ENCODE measurements at regions of chr6 and their contacts with region 1.

Region 1: DNA sequence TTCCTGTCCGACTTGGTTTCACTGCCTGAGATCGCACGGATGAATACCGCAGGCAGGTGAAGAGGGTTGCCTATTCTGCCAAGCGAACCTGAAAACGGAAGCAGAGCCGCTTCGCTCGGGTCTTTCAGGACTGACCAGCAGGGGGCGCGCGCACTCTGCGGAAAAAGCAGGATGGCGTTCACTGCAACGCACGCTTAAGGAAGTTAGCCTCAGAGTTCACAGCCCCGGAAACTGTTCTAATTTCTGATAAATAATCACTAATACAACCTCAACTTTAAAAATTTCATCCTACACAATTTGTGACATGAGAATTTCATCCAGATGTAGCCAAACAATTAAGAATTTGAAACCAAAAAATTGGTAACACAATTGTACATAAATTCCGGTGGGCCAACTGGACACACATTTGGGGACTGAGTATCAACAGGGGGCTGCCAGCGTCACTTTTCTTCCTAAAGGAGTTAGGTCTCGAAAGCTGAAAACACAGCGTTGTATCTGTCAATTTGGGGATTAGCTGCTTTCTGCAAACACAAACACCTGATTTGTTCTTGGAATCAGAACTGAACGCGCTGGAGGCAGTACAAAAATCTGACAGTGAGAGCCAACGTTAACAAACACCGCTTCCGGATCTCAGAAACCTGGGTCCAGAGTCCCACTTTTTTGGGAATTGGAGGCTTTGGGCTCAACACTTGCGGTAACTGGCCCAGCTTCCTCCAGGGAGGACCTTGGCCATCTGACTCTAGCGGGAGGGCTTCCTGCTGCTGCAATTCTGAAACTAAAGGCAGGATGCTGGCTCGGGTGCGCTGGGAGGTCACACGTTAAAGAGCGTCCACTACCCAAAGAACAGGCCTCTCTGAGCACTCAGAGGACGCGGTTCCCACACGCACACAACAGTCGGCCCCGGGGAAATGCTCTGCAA is 8.8 kb downstream of the PXDC1 start:
- DNase-seq: peak; percentile 68 to 93 (median 81)
- H3K4me3 ChIP-seq: peak overlapping the region in 1 of 4 donors; percentile 31
- H3K27ac ChIP-seq: peak overlapping the region in 4 of 5 donors; percentile 34 to 88 (median 56)
- H3K4me1 ChIP-seq: peaks cover 0 to 24% of the 10 kb centered on the region in 2 donors
- H3K27me3 ChIP-seq: no peaks in the 10 kb centered on the region
- CTCF ChIP-seq: peak; percentile 93 to 98 (median 96)
- POLR2A ChIP-seq: no peak

Region 2: GRCh38 chr6:3427687-3428085 is 315.0 kb before region 1 on chr6:
- intact Hi-C with region 1: no loop called
- DNase-seq: peak; percentile 77 to 91 (median 83)
- H3K4me3 ChIP-seq: no peak overlapping the region
- H3K27ac ChIP-seq: no peak overlapping the region
- H3K4me1 ChIP-seq: peaks cover 0 to 5% of the 10 kb centered on the region in 2 donors
- H3K27me3 ChIP-seq: no peaks in the 10 kb centered on the region
- CTCF ChIP-seq: no peak
- POLR2A ChIP-seq: no peak

Region 3: GRCh38 chr6:3887150-3887700 is 144.5 kb after region 1 on chr6:
- intact Hi-C with region 1: loop called in 1 of 2 experiments (anchors 5 kb)
- DNase-seq: peak in 3 of 7 donors; percentile 24 to 55 (median 37)
- H3K4me3 ChIP-seq: no peak overlapping the region
- H3K27ac ChIP-seq: no peak overlapping the region
- H3K4me1 ChIP-seq: no peaks in the 10 kb centered on the region
- H3K27me3 ChIP-seq: no peaks in the 10 kb centered on the region
- CTCF ChIP-seq: peak; percentile 20 to 65 (median 52)
- POLR2A ChIP-seq: no peak

Region 4: GRCh38 chr6:3929281-3929798 is 186.7 kb after region 1 on chr6:
- intact Hi-C with region 1: loop called in 1 of 2 experiments (anchors 5 kb)
- DNase-seq: peak in 5 of 7 donors; percentile 26 to 69 (median 32)
- H3K4me3 ChIP-seq: no peak overlapping the region
- H3K27ac ChIP-seq: peak overlapping the region in 1 of 5 donors; percentile 49
- H3K4me1 ChIP-seq: no peaks in the 10 kb centered on the region
- H3K27me3 ChIP-seq: no peaks in the 10 kb centered on the region
- CTCF ChIP-seq: no peak
- POLR2A ChIP-seq: no peak

Region 5: DNA sequence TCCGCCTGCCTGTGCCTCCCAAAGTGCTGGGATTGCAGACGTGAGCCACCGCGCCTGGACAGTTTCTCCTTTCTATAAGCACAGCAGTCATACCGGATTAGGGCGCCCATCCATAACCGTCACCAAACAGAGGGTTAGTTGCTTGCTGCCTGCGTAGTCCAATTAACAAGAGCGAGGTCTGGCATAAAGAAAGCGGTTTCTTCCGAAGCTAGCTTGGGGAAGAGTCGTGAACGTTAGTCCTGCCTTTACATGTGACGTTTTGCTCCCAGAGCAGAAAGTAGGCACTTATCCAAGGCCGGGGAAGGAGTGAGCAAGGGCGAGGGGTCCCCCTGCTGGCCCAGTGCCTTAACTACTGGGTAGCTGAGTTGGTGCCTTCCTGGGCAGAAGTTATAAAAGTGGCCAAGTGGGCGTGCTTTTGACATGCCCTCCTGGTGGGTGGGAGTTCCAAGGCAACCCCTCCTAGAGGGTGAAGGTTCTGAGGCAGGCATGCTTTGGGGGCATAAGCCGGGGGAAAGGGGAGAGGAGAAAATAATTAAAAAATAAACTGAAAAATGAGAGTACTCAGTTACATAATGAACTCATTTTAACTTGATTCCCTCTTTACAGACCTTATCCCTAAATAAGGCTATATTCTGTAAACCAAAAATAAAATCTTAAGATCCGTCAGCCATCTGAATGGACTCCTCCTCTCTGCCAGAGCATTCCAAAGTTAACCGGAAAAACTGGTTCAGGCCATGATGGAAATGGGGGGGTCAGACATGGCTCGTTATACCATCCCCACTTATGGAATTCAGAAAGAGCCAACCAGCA is 248.2 kb after region 1 on chr6:
- intact Hi-C with region 1: loop called (anchors 5 kb)
- DNase-seq: peak; percentile 83 to 96 (median 93)
- H3K4me3 ChIP-seq: peak overlapping the region in 2 of 4 donors; percentile 19 to 48
- H3K27ac ChIP-seq: peak overlapping the region in 4 of 5 donors; percentile 11 to 69 (median 35)
- H3K4me1 ChIP-seq: peaks cover 4 to 12% of the 10 kb centered on the region in 2 donors
- H3K27me3 ChIP-seq: no peaks in the 10 kb centered on the region
- CTCF ChIP-seq: peak; percentile 63 to 84 (median 78)
- POLR2A ChIP-seq: peak in 1 of 2 donors; percentile 18

Region 6: GRCh38 chr6:4018172-4018905 is 275.7 kb after region 1 on chr6:
- intact Hi-C with region 1: loop called in 1 of 2 experiments (anchors 10 kb)
- DNase-seq: peak; percentile 94 to 96 (median 95)
- H3K4me3 ChIP-seq: peak overlapping the region; percentile 63 to 92 (median 79)
- H3K27ac ChIP-seq: peak overlapping the region; percentile 96 to 99 (median 98)
- H3K4me1 ChIP-seq: peaks cover 20 to 40% of the 10 kb centered on the region in 2 donors
- H3K27me3 ChIP-seq: no peaks in the 10 kb centered on the region
- CTCF ChIP-seq: peak in 5 of 6 experiments; percentile 34 to 64 (median 42)
- POLR2A ChIP-seq: peak; percentile 77 to 95

Measured in adrenal gland (tissue), 19 donors.